ENCODE measurements at regions of chr14 and their contacts with region 1.

Region 1: GRCh38 chr14:102805371-102806246 is 28.4 kb downstream of the TRAF3 start:
- DNase-seq: peak; percentile 79
- H3K4me3 Mint-ChIP-seq: peak overlapping the region; percentile 72
- H3K27ac Mint-ChIP-seq: peak overlapping the region; percentile 99
- H3K4me1 Mint-ChIP-seq: peaks cover 68% of the 10 kb centered on the region
- H3K27me3 Mint-ChIP-seq: no peaks in the 10 kb centered on the region

Region 2: GRCh38 chr14:102786768-102787167 is 18.8 kb before region 1 on chr14:
- CTCF ChIA-PET with region 1: interaction called, 7 read pairs
- POLR2A ChIA-PET with region 1: interaction called, 4 read pairs
- intact Hi-C with region 1: loop called (anchors 1 kb)
- DNase-seq: peak; percentile 59
- H3K4me3 Mint-ChIP-seq: no peak overlapping the region
- H3K27ac Mint-ChIP-seq: peak overlapping the region; percentile 16
- H3K4me1 Mint-ChIP-seq: peaks cover 86% of the 10 kb centered on the region
- H3K27me3 Mint-ChIP-seq: no peaks in the 10 kb centered on the region

Region 3: DNA sequence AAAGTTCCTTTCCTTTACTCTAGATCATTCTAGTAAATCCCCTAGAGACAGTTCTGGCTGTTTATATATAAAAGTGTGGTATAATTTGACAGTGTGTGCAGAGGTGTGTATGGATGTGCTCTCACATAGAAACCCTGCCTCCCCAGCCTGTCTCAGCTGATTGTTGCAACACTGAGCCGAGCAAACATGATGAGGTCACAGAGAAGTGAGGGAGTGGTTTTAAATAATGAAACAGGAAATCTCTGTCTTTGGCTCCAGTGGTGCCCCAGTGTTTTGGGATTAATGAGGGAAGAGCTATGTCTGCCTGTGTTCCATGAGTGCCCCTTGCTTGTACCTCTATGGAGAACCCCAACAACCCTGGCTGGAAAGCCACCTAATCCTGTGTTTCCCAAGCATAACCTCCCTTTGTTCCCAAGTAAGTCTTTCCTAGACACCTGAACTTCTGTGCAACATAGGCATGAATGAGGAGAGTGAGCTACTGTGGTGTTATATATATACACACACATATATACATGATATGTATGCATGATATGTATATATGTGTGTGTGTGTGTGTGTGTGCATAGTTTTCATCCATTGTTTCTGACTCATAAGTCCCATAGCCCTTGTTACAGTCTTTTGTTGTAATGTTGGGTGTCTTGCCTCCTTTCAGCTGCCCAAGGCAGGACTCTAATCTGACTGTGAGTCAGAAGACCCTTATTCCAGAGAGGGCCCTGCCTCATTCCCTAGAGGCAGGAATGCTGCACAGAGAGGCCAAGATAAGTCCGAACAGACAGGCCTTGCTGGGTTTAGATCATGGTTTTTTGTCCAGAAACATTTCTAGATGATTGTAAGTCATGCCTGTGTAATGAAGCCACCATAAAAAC is 10.3 kb before region 1 on chr14:
- CTCF ChIA-PET with region 1: interaction called, 3 read pairs
- POLR2A ChIA-PET with region 1: interaction called, 7 read pairs
- intact Hi-C with region 1: loop called (anchors 1 kb)
- DNase-seq: peak; percentile 67
- H3K4me3 Mint-ChIP-seq: no peak overlapping the region
- H3K27ac Mint-ChIP-seq: peak overlapping the region; percentile 84
- H3K4me1 Mint-ChIP-seq: peaks cover 81% of the 10 kb centered on the region
- H3K27me3 Mint-ChIP-seq: no peaks in the 10 kb centered on the region

Region 4: GRCh38 chr14:102835959-102836358 is 30.4 kb after region 1 on chr14:
- CTCF ChIA-PET with region 1: no interaction called
- POLR2A ChIA-PET with region 1: no interaction called
- intact Hi-C with region 1: no loop called
- DNase-seq: no peak
- H3K4me3 Mint-ChIP-seq: no peak overlapping the region
- H3K27ac Mint-ChIP-seq: no peak overlapping the region
- H3K4me1 Mint-ChIP-seq: peaks cover 28% of the 10 kb centered on the region
- H3K27me3 Mint-ChIP-seq: no peaks in the 10 kb centered on the region

Region 5: DNA sequence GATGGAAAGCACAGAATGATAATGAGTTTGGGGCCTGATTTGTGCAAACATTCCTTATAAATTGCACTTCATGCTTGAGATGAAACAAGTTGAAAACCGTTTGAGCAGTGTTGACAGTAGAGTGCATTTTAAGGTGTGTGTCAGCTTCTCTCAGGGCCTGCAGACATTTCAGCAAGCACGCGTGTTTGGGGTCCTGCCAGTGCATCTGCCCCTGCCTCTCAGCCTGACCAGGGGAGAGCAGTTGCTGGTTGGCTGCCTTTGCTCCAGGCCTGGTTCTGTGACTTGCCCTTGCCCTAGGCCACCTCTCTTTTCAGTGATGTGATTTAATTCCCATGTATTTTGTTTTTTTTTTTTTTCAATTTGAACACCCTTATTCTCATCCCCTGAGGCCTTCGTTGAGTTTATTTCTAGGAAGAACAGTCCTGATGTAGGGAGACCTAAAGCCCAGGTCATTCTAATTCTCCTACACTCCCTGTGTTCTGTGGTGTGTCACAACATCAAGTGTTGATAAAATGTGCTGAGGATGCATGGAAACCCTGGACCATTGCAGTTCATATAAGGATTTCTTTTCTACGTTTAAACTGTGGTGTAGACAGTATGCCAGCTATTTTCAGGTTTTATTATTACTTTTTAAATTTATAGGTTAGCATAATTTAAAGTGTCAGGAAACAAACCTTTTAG is 76.8 kb after region 1 on chr14:
- CTCF ChIA-PET with region 1: no interaction called
- POLR2A ChIA-PET with region 1: no interaction called
- intact Hi-C with region 1: loop called (anchors 1 kb)
- DNase-seq: no peak
- H3K4me3 Mint-ChIP-seq: no peak overlapping the region
- H3K27ac Mint-ChIP-seq: peak overlapping the region; percentile 11
- H3K4me1 Mint-ChIP-seq: peaks cover 27% of the 10 kb centered on the region
- H3K27me3 Mint-ChIP-seq: no peaks in the 10 kb centered on the region

Measured in activated CD4-positive, alpha-beta memory T cell treated with anti-CD3 and anti-CD28 coated beads for 36 hours (primary cell).